Activated naive CD4-positive, alpha-beta T cell treated with anti-CD3 and anti-CD28 coated beads for 36 hours (primary cell): ENCODE measurements at regions of chr5 and their contacts with region 1.

Region 1: GRCh38 chr5:34838785-34839714 is at the start of gene TTC23L:
- DNase-seq: peak; percentile 94
- H3K4me3 Mint-ChIP-seq: peak within 1 kb of the TSS; percentile 88
- H3K27ac Mint-ChIP-seq: peak within 1 kb of the TSS; percentile 75
- H3K4me1 Mint-ChIP-seq: peaks cover 11% of the 10 kb centered on the region
- H3K27me3 Mint-ChIP-seq: no peaks in the 10 kb centered on the region
- total RNA-seq, gene TTC23L: 0.42 to 0.43 TPM

Region 2: GRCh38 chr5:34486160-34486848 is 352.7 kb before region 1 on chr5:
- CTCF ChIA-PET with region 1: no interaction called
- intact Hi-C with region 1: loop called (anchors 1 kb)
- DNase-seq: peak; percentile 87
- H3K4me3 Mint-ChIP-seq: no peak overlapping the region
- H3K27ac Mint-ChIP-seq: no peak overlapping the region
- H3K4me1 Mint-ChIP-seq: no peaks in the 10 kb centered on the region
- H3K27me3 Mint-ChIP-seq: peaks cover 29% of the 10 kb centered on the region

Region 3: DNA sequence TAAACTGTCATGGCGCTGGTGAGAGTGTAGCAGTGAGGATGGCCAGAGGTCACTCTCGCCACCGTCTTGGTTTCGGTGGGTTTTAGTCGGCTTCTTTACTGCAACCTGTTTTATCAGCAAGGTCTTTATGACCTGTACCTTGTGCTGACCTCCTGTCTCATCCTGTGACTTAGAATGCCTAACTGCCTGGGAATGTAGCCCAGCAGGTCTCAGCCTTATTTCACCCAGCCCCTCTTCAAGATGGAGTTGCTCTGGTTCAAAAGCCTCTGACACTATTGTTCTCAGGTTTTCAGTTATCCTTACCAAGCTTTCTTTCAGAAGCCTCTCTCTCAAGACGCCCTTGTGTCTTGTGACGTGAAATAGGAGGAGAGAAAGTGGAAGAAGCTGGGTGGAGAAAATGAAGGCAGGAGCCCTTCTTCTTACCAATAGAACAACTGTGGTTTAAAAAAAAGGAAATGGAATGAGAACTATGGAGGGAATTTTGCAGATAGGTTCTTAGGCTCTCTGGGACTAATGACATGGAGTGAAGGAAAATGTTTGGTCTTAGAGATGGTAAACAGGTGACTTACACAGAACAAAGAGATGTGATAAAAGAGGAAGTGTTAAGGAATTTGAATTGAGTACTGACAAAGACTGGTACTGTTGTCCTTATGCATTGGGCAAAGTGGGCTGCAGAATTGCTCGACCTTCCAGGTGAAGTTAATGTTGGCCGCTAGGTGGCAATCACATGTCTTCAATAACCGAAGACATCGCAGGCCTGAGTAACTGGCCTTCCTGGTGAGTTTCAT is 316.3 kb before region 1 on chr5:
- CTCF ChIA-PET with region 1: no interaction called
- intact Hi-C with region 1: loop called (anchors 5 kb)
- DNase-seq: peak; percentile 73
- H3K4me3 Mint-ChIP-seq: no peak overlapping the region
- H3K27ac Mint-ChIP-seq: no peak overlapping the region
- H3K4me1 Mint-ChIP-seq: peaks cover 4% of the 10 kb centered on the region
- H3K27me3 Mint-ChIP-seq: peaks cover 3% of the 10 kb centered on the region

Region 4: DNA sequence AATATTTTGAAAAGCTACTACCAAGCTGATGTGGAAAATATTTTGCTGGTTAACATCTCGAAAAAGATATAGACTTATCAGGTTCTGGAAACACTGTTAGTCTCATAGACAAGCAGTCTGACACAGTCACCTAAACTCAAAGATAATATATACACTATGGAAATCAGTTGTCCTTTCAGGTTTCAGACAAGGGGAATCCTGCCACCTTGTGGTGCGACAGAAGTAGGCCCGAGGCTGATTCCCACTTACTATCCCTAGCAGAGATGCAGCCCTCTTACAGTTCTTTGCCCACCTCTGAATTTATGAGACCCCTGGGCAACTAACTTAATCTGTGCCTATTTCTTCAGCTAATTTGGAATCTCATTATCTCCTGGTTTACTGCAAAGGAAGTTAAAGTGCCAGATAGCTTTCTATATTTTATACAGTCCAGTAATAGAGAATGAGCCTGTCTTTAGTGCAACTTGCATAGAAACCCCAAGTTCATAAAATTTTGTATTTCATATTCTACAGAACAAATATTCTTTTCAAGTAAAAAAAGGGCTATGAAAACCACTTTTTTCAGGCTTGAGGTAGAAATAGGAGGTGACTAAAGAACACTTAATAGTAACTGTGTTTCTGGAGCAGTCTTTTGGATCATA is 59.3 kb after region 1 on chr5:
- CTCF ChIA-PET with region 1: interaction called, 3 read pairs
- intact Hi-C with region 1: loop called (anchors 1 kb)
- DNase-seq: peak; percentile 77
- H3K4me3 Mint-ChIP-seq: no peak overlapping the region
- H3K27ac Mint-ChIP-seq: no peak overlapping the region
- H3K4me1 Mint-ChIP-seq: no peaks in the 10 kb centered on the region
- H3K27me3 Mint-ChIP-seq: no peaks in the 10 kb centered on the region

Region 5: DNA sequence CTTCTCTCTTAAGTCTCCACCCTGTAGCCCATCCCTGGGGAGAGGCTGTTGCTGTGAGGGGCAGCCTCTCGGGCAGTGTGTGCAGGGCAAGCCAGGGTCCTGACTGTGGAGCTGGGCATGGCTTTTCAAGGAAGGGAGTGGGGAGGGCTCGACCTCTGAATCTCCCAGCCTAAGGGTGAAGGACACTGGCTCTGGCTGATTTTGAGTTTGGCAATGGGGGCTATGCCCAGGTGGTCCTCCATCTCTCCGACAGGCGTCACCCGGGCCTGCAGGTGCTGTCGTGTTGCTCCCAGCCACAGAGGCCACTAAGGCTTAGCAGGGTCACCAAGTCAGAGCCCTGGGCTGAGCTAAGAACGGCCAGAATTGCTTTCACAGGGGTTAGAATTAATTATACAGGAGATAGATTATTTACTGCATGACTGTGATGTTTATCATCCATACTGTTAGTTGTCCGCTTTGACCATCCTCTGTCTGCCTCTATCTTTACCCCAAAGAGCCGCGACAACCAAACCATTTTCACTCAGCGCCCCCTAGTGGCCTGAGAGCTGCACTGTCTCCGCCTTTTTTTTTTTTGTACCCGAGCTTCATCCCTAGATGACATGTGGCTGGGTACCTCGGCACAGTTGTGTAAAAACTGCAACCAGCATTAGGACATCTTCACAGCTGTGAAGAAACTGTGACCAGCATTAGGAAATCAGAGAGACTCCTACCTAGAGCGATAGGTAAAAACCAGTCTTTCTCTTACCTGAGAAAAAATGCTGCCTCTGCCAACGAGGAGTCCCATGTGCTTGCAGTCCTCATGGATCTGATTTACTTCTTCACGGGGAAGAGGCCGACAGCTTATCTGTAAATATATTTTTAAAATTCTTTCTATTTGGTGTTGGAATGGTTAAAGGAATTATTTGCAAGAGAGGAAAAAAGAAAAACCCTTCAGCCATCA is 164.2 kb after region 1 on chr5:
- CTCF ChIA-PET with region 1: no interaction called
- intact Hi-C with region 1: loop called (anchors 5 kb)
- DNase-seq: peak; percentile 76
- H3K4me3 Mint-ChIP-seq: no peak overlapping the region
- H3K27ac Mint-ChIP-seq: no peak overlapping the region
- H3K4me1 Mint-ChIP-seq: no peaks in the 10 kb centered on the region
- H3K27me3 Mint-ChIP-seq: peaks cover 16% of the 10 kb centered on the region

Region 6: GRCh38 chr5:36606428-36607113 is 1767.5 kb after region 1 on chr5 and contains the start of gene SLC1A3:
- CTCF ChIA-PET with region 1: no interaction called
- intact Hi-C with region 1: loop called (anchors 5 kb)
- DNase-seq: peak; percentile 80
- H3K4me3 Mint-ChIP-seq: peak within 1 kb of the TSS; percentile 71
- H3K27ac Mint-ChIP-seq: peak within 1 kb of the TSS; percentile 67
- H3K4me1 Mint-ChIP-seq: peaks cover 19% of the 10 kb centered on the region
- H3K27me3 Mint-ChIP-seq: peaks cover 47% of the 10 kb centered on the region
- total RNA-seq, gene SLC1A3: 0.86 to 0.99 TPM